Mammary epithelial cell (primary cell): ENCODE measurements at regions of chr6 and their contacts with region 1.

Region 1: DNA sequence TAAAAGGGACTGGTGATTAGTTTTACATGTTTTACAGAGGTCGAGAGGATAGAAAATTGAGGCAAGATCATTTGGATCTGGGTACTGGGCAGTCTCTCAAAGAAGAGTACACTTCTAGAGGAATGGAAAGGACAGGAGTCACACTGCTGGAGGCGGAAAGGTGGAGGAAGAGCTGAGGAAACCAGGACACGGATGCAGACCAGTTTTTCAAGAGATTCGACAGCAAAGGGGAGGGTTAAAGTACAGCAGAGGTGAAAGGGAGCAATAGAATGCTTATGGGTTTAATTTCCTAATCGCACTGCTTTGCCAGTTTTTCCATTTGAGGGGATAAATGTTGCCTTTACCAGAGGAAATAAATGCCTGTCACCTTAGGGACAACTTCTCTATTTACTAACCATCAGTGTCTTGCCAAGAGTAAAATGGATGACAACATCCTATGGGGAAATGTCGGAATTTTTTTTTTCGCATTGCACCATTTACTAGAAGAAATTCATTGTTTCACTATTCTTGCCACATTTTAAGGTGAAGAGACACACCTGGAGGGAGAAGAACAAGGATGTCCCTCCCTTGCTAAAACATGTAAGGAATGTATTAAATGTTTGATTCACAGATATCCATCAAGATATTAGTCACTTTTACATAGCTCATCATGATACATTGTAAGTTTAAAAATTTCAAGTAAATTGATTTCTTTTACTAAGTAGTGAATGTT is 226.6 kb downstream of the COL12A1 start:
- DNase-seq: peak; percentile 96
- H3K4me3 ChIP-seq: no peak overlapping the region
- H3K27ac ChIP-seq: peak overlapping the region; percentile 99
- H3K4me1 ChIP-seq: peaks cover 29% of the 10 kb centered on the region
- H3K27me3 ChIP-seq: no peaks in the 10 kb centered on the region
- CTCF ChIP-seq: no peak

Region 2: GRCh38 chr6:74931558-74931957 is 47.7 kb before region 1 on chr6:
- CTCF ChIA-PET with region 1: no interaction called
- dilution Hi-C with region 1: no loop called
- in situ Hi-C with region 1: no loop called
- intact Hi-C with region 1: loop called (anchors 5 kb)
- DNase-seq: peak; percentile 60
- H3K4me3 ChIP-seq: no peak overlapping the region
- H3K27ac ChIP-seq: peak overlapping the region; percentile 74
- H3K4me1 ChIP-seq: peaks cover 26% of the 10 kb centered on the region
- H3K27me3 ChIP-seq: no peaks in the 10 kb centered on the region
- CTCF ChIP-seq: no peak

Region 3: DNA sequence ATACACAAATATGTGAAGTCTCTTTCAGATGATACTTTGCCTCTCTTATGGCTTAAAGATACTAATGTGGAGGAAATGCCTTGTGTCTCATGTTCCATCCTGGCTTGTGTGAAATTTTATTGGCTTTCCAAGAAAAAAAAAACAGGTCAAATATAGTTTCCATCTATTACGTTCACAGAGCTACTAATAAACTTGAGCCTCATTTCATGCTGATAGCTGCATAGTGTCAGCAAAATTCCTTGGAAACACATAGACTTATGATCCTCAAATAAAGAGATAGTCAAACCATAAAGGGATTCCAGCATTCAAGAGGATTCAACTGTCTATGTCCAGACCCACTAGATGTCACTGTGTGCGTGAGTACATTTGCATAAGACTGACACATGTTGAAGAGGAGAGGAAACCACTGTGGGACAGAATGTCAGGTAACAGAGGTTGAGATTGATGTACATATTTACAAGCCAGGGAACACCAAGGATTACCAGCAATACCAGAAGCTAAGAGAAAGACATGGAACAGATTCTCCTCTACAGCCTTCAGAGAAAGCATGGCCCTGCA is 40.0 kb before region 1 on chr6:
- CTCF ChIA-PET with region 1: no interaction called
- dilution Hi-C with region 1: loop called (anchors 5 kb)
- in situ Hi-C with region 1: no loop called
- intact Hi-C with region 1: loop called (anchors 5 kb)
- DNase-seq: peak; percentile 39
- H3K4me3 ChIP-seq: no peak overlapping the region
- H3K27ac ChIP-seq: no peak overlapping the region
- H3K4me1 ChIP-seq: peaks cover 18% of the 10 kb centered on the region
- H3K27me3 ChIP-seq: no peaks in the 10 kb centered on the region
- CTCF ChIP-seq: peak in 1 of 2 donors; percentile 41